IMR-90 (cell line): ENCODE measurements at regions of chr22 and their contacts with region 1.

Region 1: DNA sequence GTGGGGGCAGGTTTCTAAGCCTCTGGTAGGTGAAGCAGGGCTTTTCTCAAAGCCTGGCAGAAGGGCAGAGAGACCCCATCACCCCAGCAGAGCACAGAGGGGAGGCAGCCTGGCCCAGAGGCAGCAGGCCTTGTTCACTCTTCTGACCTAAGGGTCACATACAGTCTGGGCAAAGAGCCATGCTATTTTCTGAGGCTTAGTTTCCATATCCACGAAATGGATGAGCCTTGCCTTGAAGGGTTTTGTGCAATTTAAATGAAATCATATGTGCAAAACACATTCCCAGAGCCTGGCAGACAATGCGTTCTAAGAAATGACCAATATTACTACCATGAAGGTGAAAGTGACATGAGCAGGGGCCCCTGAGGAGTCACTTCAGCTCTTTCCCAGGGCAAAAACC is 44.5 kb downstream of the HIRA start:
- DNase-seq: no peak
- ATAC-seq: no peak
- H3K4me3 ChIP-seq: no peak overlapping the region
- H3K27ac ChIP-seq: no peak overlapping the region
- H3K4me1 ChIP-seq: no peaks in the 10 kb centered on the region
- H3K27me3 ChIP-seq: no peaks in the 10 kb centered on the region
- CTCF ChIP-seq: no peak
- POLR2A ChIP-seq: no peak
- RAD21 ChIP-seq: no peak

Region 2: DNA sequence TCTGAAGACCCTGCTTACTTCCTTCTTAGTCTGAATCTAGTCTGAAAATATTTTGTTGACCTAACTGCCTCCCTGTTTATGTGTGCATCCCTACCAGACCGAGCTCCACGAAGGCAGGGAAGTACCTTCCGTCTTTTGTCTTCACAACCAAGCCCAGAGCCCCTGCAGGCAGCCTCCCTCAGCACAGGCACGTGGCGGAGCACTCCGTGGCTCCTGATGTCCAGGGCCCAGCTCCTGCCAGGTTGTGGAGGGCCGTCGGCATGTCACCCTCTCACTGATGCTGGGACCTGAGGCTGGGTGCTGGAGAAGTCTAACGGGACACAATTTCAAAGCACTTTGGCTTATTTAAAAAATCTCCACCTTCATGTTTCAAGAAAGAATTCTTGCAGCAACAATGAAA is 36.1 kb before region 1 on chr22:
- CTCF ChIA-PET with region 1: no interaction called
- POLR2A ChIA-PET with region 1: interaction called, 10 read pairs
- dilution Hi-C with region 1: no loop called
- in situ Hi-C with region 1: no loop called
- intact Hi-C with region 1: no loop called
- DNase-seq: no peak
- ATAC-seq: no peak
- H3K4me3 ChIP-seq: no peak overlapping the region
- H3K27ac ChIP-seq: no peak overlapping the region
- H3K4me1 ChIP-seq: no peaks in the 10 kb centered on the region
- H3K27me3 ChIP-seq: no peaks in the 10 kb centered on the region
- CTCF ChIP-seq: no peak
- POLR2A ChIP-seq: no peak
- RAD21 ChIP-seq: no peak

Region 3: GRCh38 chr22:19447388-19448075 is 60.5 kb after region 1 on chr22 and contains the start of gene C22orf39:
- CTCF ChIA-PET with region 1: no interaction called
- POLR2A ChIA-PET with region 1: no interaction called
- dilution Hi-C with region 1: no loop called
- in situ Hi-C with region 1: loop called (anchors 10 kb)
- intact Hi-C with region 1: no loop called
- DNase-seq: peak; percentile 92
- ATAC-seq: peak; percentile 94
- H3K4me3 ChIP-seq: peak within 1 kb of the TSS; percentile 81
- H3K27ac ChIP-seq: peak within 1 kb of the TSS; percentile 67
- H3K4me1 ChIP-seq: peaks cover 9% of the 10 kb centered on the region
- H3K27me3 ChIP-seq: no peaks in the 10 kb centered on the region
- CTCF ChIP-seq: no peak
- POLR2A ChIP-seq: peak; percentile 52; the same call in 1 of the 2 replicates
- RAD21 ChIP-seq: no peak
- total RNA-seq, gene C22orf39: 8.2 and 9.2 TPM in 2 replicates